ENCODE measurements at regions of chr2 and their contacts with region 1.

Region 1: GRCh38 chr2:20051532-20052228 is at the start of gene LAPTM4A:
- DNase-seq: peak; percentile 94 to 100
- ATAC-seq: peak; percentile 88 to 97 (median 93)
- H3K4me3 ChIP-seq: peak within 1 kb of the TSS; percentile 90
- H3K4me3 Mint-ChIP-seq: no peak within 1 kb of the TSS
- H3K27ac ChIP-seq: peak within 1 kb of the TSS; percentile 100
- H3K27ac Mint-ChIP-seq: no peak within 1 kb of the TSS
- H3K4me1 ChIP-seq: peaks cover 14% of the 10 kb centered on the region
- H3K4me1 Mint-ChIP-seq: peaks cover 5 to 26% of the 10 kb centered on the region in 2 donors
- H3K27me3 ChIP-seq: peaks cover 12% of the 10 kb centered on the region
- H3K27me3 Mint-ChIP-seq: peaks cover 11 to 15% of the 10 kb centered on the region in 2 donors
- CTCF ChIP-seq: no peak
- total RNA-seq, gene LAPTM4A: 60.6 to 98.4 (median 75.0) TPM

Region 2: GRCh38 chr2:19955544-19956422 is 95.9 kb before region 1 on chr2:
- intact Hi-C with region 1: loop called (anchors 1 kb)
- DNase-seq: peak; percentile 17 to 74
- ATAC-seq: peak; percentile 82 to 96 (median 89)
- H3K4me3 ChIP-seq: no peak overlapping the region
- H3K4me3 Mint-ChIP-seq: no peak overlapping the region
- H3K27ac ChIP-seq: no peak overlapping the region
- H3K27ac Mint-ChIP-seq: no peak overlapping the region
- H3K4me1 ChIP-seq: no peaks in the 10 kb centered on the region
- H3K4me1 Mint-ChIP-seq: no peaks in the 10 kb centered on the region
- H3K27me3 ChIP-seq: no peaks in the 10 kb centered on the region
- H3K27me3 Mint-ChIP-seq: no peaks in the 10 kb centered on the region
- CTCF ChIP-seq: peak; percentile 69

Region 3: DNA sequence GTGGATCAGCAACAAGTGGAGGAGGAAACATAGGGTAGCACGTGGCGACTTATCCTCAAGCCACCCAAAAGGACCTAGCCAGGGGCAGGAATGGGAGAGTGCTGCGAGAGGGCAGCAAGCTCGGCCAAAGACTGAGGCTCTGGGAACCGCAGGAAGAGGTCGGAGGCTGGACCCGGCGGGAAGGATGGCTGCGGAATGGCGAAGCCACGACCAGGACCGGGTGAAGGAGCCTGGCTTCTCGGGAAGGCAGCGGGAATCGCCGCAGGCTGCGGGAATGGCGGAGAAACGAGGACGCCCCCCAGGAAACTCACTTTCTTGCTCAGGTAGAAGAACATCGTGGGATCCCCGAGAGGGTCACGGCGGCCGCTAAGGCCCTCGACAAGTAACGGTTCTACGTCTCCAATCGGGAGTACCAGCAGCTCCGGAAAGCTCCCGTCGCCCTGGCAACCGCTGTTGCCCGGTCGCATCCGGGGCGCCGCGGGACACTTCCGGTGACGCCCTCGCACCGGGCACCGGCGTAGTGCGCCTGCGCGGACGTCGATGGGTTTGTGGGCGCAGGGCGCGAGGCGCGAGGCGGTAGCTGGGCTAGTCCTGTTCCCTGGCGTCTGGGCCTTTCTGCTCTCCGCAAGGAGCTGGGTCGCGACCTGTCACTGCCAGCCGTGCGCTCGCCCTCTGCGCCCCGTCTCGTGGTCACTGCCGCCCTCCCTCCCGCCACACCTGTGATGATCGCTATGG is 61.8 kb before region 1 on chr2 and contains the start of gene WDR35:
- intact Hi-C with region 1: loop called (anchors 1 kb)
- DNase-seq: peak; percentile 92 to 94
- ATAC-seq: peak; percentile 92 to 98 (median 93)
- H3K4me3 ChIP-seq: peak within 1 kb of the TSS; percentile 90
- H3K4me3 Mint-ChIP-seq: peak within 1 kb of the TSS; percentile 95
- H3K27ac ChIP-seq: peak within 1 kb of the TSS; percentile 78
- H3K27ac Mint-ChIP-seq: peak within 1 kb of the TSS; percentile 88 to 89
- H3K4me1 ChIP-seq: peaks cover 13% of the 10 kb centered on the region
- H3K4me1 Mint-ChIP-seq: peaks cover 24 to 36% of the 10 kb centered on the region in 2 donors
- H3K27me3 ChIP-seq: peaks cover 3% of the 10 kb centered on the region
- H3K27me3 Mint-ChIP-seq: peaks cover 16 to 28% of the 10 kb centered on the region in 2 donors
- CTCF ChIP-seq: no peak
- total RNA-seq, gene WDR35: 5.8 to 8.3 (median 7.7) TPM

Region 4: GRCh38 chr2:20040489-20041172 is 11.0 kb before region 1 on chr2:
- intact Hi-C with region 1: no loop called
- DNase-seq: no peak
- ATAC-seq: no peak
- H3K4me3 ChIP-seq: no peak overlapping the region
- H3K4me3 Mint-ChIP-seq: no peak overlapping the region
- H3K27ac ChIP-seq: no peak overlapping the region
- H3K27ac Mint-ChIP-seq: no peak overlapping the region
- H3K4me1 ChIP-seq: no peaks in the 10 kb centered on the region
- H3K4me1 Mint-ChIP-seq: peaks cover 10 to 24% of the 10 kb centered on the region in 2 donors
- H3K27me3 ChIP-seq: no peaks in the 10 kb centered on the region
- H3K27me3 Mint-ChIP-seq: no peaks in the 10 kb centered on the region
- CTCF ChIP-seq: no peak

Region 5: GRCh38 chr2:20326163-20326780 is 274.6 kb after region 1 on chr2:
- intact Hi-C with region 1: loop called (anchors 5 kb)
- DNase-seq: peak in 1 of 2 donors; percentile 75
- ATAC-seq: peak; percentile 73 to 91 (median 91)
- H3K4me3 ChIP-seq: no peak overlapping the region
- H3K4me3 Mint-ChIP-seq: no peak overlapping the region
- H3K27ac ChIP-seq: no peak overlapping the region
- H3K27ac Mint-ChIP-seq: peak overlapping the region; percentile 64 to 68
- H3K4me1 ChIP-seq: peaks cover 6% of the 10 kb centered on the region
- H3K4me1 Mint-ChIP-seq: peaks cover 72 to 73% of the 10 kb centered on the region in 2 donors
- H3K27me3 ChIP-seq: no peaks in the 10 kb centered on the region
- H3K27me3 Mint-ChIP-seq: no peaks in the 10 kb centered on the region
- CTCF ChIP-seq: peak; percentile 78

Region 6: GRCh38 chr2:20868377-20868776 is 816.7 kb after region 1 on chr2:
- intact Hi-C with region 1: no loop called
- DNase-seq: peak in 1 of 2 donors; percentile 52
- ATAC-seq: peak in 1 of 3 donors; percentile 30
- H3K4me3 ChIP-seq: no peak overlapping the region
- H3K4me3 Mint-ChIP-seq: no peak overlapping the region
- H3K27ac ChIP-seq: no peak overlapping the region
- H3K27ac Mint-ChIP-seq: no peak overlapping the region
- H3K4me1 ChIP-seq: no peaks in the 10 kb centered on the region
- H3K4me1 Mint-ChIP-seq: peaks cover 0 to 5% of the 10 kb centered on the region in 2 donors
- H3K27me3 ChIP-seq: no peaks in the 10 kb centered on the region
- H3K27me3 Mint-ChIP-seq: peaks cover 20 to 55% of the 10 kb centered on the region in 2 donors
- CTCF ChIP-seq: no peak

Measured in natural killer cell (primary cell).